ENCODE measurements at regions of chr5 and their contacts with region 1.

Region 1: GRCh38 chr5:96344678-96345577 is 88.1 kb downstream of the PCSK1 start:
- DNase-seq: no peak
- H3K4me3 Mint-ChIP-seq: no peak overlapping the region
- H3K27ac Mint-ChIP-seq: no peak overlapping the region
- H3K4me1 Mint-ChIP-seq: peaks cover 21% of the 10 kb centered on the region
- H3K27me3 Mint-ChIP-seq: peaks cover 41% of the 10 kb centered on the region

Region 2: GRCh38 chr5:96601811-96602244 is 256.9 kb after region 1 on chr5:
- CTCF ChIA-PET with region 1: interaction called, 90 read pairs
- POLR2A ChIA-PET with region 1: interaction called, 3 read pairs
- DNase-seq: peak; percentile 45
- H3K4me3 Mint-ChIP-seq: no peak overlapping the region
- H3K27ac Mint-ChIP-seq: no peak overlapping the region
- H3K4me1 Mint-ChIP-seq: peaks cover 1% of the 10 kb centered on the region
- H3K27me3 Mint-ChIP-seq: peaks cover 18% of the 10 kb centered on the region

Region 3: DNA sequence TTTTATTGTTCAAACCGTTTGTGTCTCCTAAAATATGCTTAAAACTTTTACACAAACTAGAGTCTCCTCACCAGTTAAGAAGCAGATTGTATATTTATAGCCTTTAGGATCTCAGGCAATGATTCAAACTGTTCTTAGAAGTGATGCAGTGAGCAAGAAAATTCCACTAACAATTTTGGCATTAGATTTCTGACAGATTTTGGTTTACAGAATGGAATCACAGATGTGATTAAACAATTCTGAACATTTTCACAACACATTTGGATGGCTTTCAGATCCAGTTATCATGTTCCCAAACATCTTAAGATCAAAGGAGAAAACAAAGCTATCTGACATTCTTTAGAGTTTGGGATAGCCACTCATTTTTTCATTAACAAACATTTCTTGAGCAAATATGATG is 1019.8 kb after region 1 on chr5:
- CTCF ChIA-PET with region 1: no interaction called
- POLR2A ChIA-PET with region 1: no interaction called
- DNase-seq: no peak
- H3K4me3 Mint-ChIP-seq: no peak overlapping the region
- H3K27ac Mint-ChIP-seq: no peak overlapping the region
- H3K4me1 Mint-ChIP-seq: no peaks in the 10 kb centered on the region
- H3K27me3 Mint-ChIP-seq: no peaks in the 10 kb centered on the region

Measured in activated CD4-positive, alpha-beta memory T cell treated with anti-CD3 and anti-CD28 coated beads, Interleukin-2, amount 10 ng/mL, durations not matched to agents 7 days and 5 days (primary cell).